ENCODE measurements at regions of chr1 and their contacts with region 1.

Region 1: GRCh38 chr1:29033829-29034466 is 89.8 kb downstream of the TMEM200B start:
- DNase-seq: no peak
- ATAC-seq: peak in 2 of 4 donors; percentile 46 to 55
- H3K4me3 ChIP-seq: no peak overlapping the region
- H3K27ac ChIP-seq: no peak overlapping the region
- H3K4me1 ChIP-seq: peaks cover 0 to 6% (median 0%) of the 10 kb centered on the region in 12 donors
- H3K27me3 ChIP-seq: no peaks in the 10 kb centered on the region
- CTCF ChIP-seq: peak; percentile 49 to 78 (median 66)
- POLR2A ChIP-seq: no peak

Region 2: GRCh38 chr1:28775121-28775944 is 258.6 kb before region 1 on chr1:
- intact Hi-C with region 1: loop called in 5 of 10 experiments (anchors 10 kb)
- DNase-seq: peak; percentile 79 to 89 (median 85)
- ATAC-seq: peak; percentile 72 to 97 (median 96)
- H3K4me3 ChIP-seq: peak overlapping the region in 11 of 12 donors; percentile 13 to 61 (median 49)
- H3K27ac ChIP-seq: peak overlapping the region in 5 of 12 donors; percentile 2 to 34 (median 21)
- H3K4me1 ChIP-seq: peaks cover 0 to 17% (median 6%) of the 10 kb centered on the region in 12 donors
- H3K27me3 ChIP-seq: no peaks in the 10 kb centered on the region
- CTCF ChIP-seq: peak in 2 of 12 donors; percentile 3 to 11
- POLR2A ChIP-seq: no peak

Region 3: GRCh38 chr1:28792644-28793121 is 241.3 kb before region 1 on chr1:
- intact Hi-C with region 1: loop called (anchors 5 to 10 kb)
- DNase-seq: no peak
- ATAC-seq: peak in 2 of 4 donors; percentile 47 to 61
- H3K4me3 ChIP-seq: no peak overlapping the region
- H3K27ac ChIP-seq: peak overlapping the region in 1 of 12 donors; percentile 48
- H3K4me1 ChIP-seq: peaks cover 0 to 13% (median 0%) of the 10 kb centered on the region in 12 donors
- H3K27me3 ChIP-seq: peaks cover 0 to 9% (median 0%) of the 10 kb centered on the region in 9 donors
- CTCF ChIP-seq: peak in 2 of 12 donors; percentile 19 to 41
- POLR2A ChIP-seq: no peak